AG04450 (cell line): ENCODE measurements at regions of chr3 and their contacts with region 1.

Region 1: GRCh38 chr3:158790901-158791589 is 10.8 kb upstream of the MFSD1 start:
- DNase-seq: no peak
- H3K4me3 ChIP-seq: no peak overlapping the region
- H3K27ac ChIP-seq: no peak overlapping the region
- H3K27me3 ChIP-seq: no peaks in the 10 kb centered on the region
- CTCF ChIP-seq: peak; percentile 84

Region 2: DNA sequence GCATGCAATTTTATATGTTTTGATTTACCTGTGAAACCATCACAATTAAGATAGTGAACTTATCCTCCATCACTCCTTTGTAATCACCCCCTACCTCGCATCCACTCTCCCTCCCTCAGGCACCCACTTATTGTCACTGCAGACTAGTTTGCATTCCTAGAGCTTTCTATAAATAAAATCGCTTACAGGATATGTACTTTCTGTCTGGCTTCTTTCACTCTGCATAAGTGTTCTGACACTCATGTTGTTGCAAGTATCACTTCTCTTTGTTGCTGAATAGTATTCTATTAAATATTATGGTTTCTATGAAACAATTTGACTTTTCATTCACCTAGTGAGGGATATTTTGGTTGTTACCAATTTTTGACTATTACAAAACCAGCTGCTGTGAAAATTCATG is 541.9 kb before region 1 on chr3:
- CTCF ChIA-PET with region 1: no interaction called
- POLR2A ChIA-PET with region 1: no interaction called
- DNase-seq: no peak
- H3K4me3 ChIP-seq: no peak overlapping the region
- H3K27ac ChIP-seq: no peak overlapping the region
- H3K27me3 ChIP-seq: no peaks in the 10 kb centered on the region
- CTCF ChIP-seq: no peak

Region 3: GRCh38 chr3:158509891-158510290 is 281.2 kb before region 1 on chr3:
- CTCF ChIA-PET with region 1: no interaction called
- POLR2A ChIA-PET with region 1: no interaction called
- DNase-seq: no peak
- H3K4me3 ChIP-seq: no peak overlapping the region
- H3K27ac ChIP-seq: no peak overlapping the region
- H3K27me3 ChIP-seq: no peaks in the 10 kb centered on the region
- CTCF ChIP-seq: no peak

Region 4: GRCh38 chr3:158644345-158644908 is 146.6 kb before region 1 on chr3 and contains the start of gene GFM1:
- CTCF ChIA-PET with region 1: interaction called, 31 read pairs
- POLR2A ChIA-PET with region 1: interaction called, 3 read pairs
- DNase-seq: peak; percentile 86
- H3K4me3 ChIP-seq: peak within 1 kb of the TSS; percentile 92
- H3K27ac ChIP-seq: peak within 1 kb of the TSS; percentile 87
- H3K27me3 ChIP-seq: no peaks in the 10 kb centered on the region
- CTCF ChIP-seq: peak; percentile 94
- polyA plus RNA-seq, gene GFM1: 18.9 and 22.2 TPM in 2 replicates

Region 5: DNA sequence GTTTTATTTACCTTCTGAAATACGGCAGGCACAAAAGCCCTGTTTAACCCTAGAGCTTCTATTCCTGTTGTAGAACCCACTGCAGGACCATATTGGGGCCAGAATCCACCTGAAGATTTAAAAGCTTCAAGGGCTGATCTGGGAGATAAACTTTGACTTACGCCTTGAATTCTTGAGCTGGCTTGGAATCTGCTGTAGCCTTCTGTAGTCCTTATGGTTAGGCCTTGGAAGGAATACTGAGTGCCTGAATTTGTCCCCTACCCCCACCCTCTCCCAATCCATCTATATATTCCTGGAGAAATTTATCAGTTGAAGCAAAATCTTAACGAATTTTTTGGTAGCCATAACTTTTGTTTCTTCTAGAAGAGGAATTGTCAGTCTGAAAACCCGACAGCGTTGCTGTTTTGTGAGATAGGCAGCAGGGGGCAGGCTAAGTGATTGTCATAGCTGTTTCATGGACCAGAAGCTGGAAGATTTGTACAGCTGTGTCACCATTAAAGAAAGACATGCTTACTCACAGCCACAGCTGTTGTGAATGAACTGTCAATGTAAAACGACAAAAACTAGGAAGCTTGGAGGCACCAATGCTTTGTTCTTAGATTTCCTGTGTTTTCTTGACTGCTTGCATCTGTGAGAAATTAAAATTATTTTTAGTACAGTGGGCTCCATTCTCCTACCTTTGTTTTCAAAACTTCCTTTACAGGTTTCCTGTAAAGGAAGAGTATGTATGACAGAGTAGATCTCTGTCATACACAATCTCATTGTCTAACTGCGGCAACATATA is 131.4 kb before region 1 on chr3:
- CTCF ChIA-PET with region 1: interaction called, 268 read pairs
- POLR2A ChIA-PET with region 1: interaction called, 8 read pairs
- DNase-seq: peak; percentile 55
- H3K4me3 ChIP-seq: no peak overlapping the region
- H3K27ac ChIP-seq: no peak overlapping the region
- H3K27me3 ChIP-seq: no peaks in the 10 kb centered on the region
- CTCF ChIP-seq: peak; percentile 76

Region 6: GRCh38 chr3:158696618-158697017 is 94.4 kb before region 1 on chr3:
- CTCF ChIA-PET with region 1: interaction called, 10 read pairs
- POLR2A ChIA-PET with region 1: no interaction called
- DNase-seq: no peak
- H3K4me3 ChIP-seq: no peak overlapping the region
- H3K27ac ChIP-seq: no peak overlapping the region
- H3K27me3 ChIP-seq: no peaks in the 10 kb centered on the region
- CTCF ChIP-seq: no peak

Region 7: GRCh38 chr3:158769952-158770740 is 20.9 kb before region 1 on chr3:
- CTCF ChIA-PET with region 1: interaction called, 12 read pairs
- POLR2A ChIA-PET with region 1: no interaction called
- DNase-seq: peak; percentile 72
- H3K4me3 ChIP-seq: no peak overlapping the region
- H3K27ac ChIP-seq: peak overlapping the region; percentile 92
- H3K27me3 ChIP-seq: no peaks in the 10 kb centered on the region
- CTCF ChIP-seq: no peak

Region 8: GRCh38 chr3:158801696-158802408 is 10.8 kb after region 1 on chr3 and contains the start of gene MFSD1:
- CTCF ChIA-PET with region 1: interaction called, 20 read pairs
- POLR2A ChIA-PET with region 1: interaction called, 3 read pairs
- DNase-seq: peak; percentile 67
- H3K4me3 ChIP-seq: peak within 1 kb of the TSS; percentile 79
- H3K27ac ChIP-seq: peak within 1 kb of the TSS; percentile 74
- H3K27me3 ChIP-seq: no peaks in the 10 kb centered on the region
- CTCF ChIP-seq: no peak
- polyA plus RNA-seq, gene MFSD1: 69.6 and 89.9 TPM in 2 replicates